Calu3 (cell line): ENCODE measurements at regions of chr19 and their contacts with region 1.

Region 1: DNA sequence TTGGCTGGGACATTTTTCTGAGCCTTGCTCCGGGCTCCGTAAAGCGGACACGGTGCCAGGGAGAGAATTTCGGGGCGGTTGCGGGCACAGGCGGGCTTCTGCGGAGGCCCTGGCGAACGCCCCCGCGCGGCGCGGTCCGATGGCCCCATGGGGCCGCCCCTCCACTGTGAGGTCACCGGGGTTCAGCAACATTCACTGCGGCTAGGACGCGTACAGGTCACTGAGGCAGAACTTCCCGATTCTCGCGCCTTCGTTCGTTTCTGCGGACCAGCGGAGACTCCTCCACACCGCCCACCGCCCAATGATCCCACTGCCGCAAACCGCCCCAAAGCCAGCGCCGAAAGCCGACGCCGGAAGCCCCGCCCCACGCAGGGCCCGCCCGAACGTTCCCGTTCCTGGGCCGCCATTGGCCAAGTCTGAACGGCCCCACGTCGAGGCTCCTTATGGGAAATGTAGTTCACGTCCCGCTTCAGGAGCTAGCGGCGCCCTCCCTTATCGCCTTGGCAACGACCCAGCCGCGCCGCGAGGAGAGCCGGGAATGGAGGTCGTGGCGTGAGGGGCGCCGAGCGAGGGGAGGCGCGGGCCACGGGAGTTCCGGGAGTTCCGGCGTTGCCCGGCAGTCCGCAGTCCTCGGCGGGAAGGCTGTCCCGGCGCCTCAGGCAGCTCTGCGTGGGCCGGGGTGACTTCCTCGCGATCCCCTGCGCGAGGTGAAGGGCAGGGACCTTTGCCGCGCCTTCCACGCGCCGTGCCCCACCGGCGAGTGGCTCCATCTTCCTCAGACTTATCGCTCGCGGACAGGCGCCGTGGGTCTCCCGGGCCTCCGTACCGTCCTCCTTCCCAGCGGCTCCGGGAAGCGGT is at the start of gene ZNF584:
- DNase-seq: peak; percentile 97
- H3K4me3 Mint-ChIP-seq: peak within 1 kb of the TSS; percentile 83
- H3K27ac Mint-ChIP-seq: peak within 1 kb of the TSS; percentile 92
- H3K4me1 Mint-ChIP-seq: peaks cover 36% of the 10 kb centered on the region
- H3K27me3 Mint-ChIP-seq: no peaks in the 10 kb centered on the region
- CTCF ChIP-seq: no peak
- total RNA-seq, gene ZNF584: 21.8 and 23.4 TPM in 2 replicates

Region 2: DNA sequence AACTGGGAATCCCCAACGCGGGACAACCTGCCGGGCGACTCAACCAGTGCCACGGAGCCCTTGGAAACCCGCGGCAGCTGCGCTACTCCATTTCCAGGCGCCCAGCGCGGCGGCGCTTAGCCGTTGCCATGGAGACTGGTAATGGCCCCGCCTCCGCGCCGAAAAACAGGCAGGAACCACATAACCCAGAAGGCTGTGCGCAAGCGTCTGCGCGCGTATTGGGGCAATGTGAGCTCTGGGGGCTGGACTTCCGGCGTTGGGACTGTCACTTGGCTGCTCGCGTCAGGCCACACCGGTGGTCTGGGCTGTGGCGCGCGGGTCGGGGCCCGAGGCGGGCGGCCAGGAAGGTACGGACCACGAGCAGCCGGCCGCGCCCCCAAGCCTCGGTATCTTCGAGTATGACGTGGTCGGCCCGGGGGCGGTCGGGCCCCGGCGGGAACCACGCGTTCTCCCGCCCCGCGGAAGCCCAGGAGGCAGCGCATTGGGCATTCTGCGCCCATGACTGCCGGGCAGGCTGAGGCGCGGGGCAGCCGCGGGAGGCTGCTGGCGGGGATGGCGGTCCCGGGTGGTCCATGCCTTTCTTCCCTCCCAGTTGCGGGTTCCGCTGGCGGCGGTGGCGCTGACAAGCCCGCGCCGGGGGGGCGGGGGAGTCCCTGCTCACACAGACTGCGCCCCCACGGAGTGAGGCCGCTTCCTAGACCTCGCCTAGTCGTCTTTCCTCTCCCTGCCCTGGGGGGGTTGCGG is 43.1 kb after region 1 on chr19 and contains the start of gene ZNF324B:
- CTCF ChIA-PET with region 1: no interaction called
- intact Hi-C with region 1: loop called (anchors 5 kb)
- DNase-seq: peak; percentile 98
- H3K4me3 Mint-ChIP-seq: peak within 1 kb of the TSS; percentile 90
- H3K27ac Mint-ChIP-seq: peak within 1 kb of the TSS; percentile 81
- H3K4me1 Mint-ChIP-seq: peaks cover 24% of the 10 kb centered on the region
- H3K27me3 Mint-ChIP-seq: no peaks in the 10 kb centered on the region
- CTCF ChIP-seq: no peak
- total RNA-seq, gene ZNF324B: 12.0 and 13.7 TPM in 2 replicates